Body of pancreas (tissue), 4 donors: ENCODE measurements at regions of chr17 and their contacts with region 1.

Region 1: GRCh38 chr17:31842183-31843069 is 16.6 kb downstream of the COPRS start:
- DNase-seq: peak; percentile 75 to 81 (median 78)
- ATAC-seq: peak; percentile 88
- H3K4me3 ChIP-seq: no peak overlapping the region
- H3K27ac ChIP-seq: peak overlapping the region; percentile 30 to 73 (median 65)
- H3K4me1 ChIP-seq: peaks cover 29% of the 10 kb centered on the region
- H3K27me3 ChIP-seq: no peaks in the 10 kb centered on the region
- CTCF ChIP-seq: peak; percentile 91 to 98 (median 97)
- POLR2A ChIP-seq: no peak

Region 2: DNA sequence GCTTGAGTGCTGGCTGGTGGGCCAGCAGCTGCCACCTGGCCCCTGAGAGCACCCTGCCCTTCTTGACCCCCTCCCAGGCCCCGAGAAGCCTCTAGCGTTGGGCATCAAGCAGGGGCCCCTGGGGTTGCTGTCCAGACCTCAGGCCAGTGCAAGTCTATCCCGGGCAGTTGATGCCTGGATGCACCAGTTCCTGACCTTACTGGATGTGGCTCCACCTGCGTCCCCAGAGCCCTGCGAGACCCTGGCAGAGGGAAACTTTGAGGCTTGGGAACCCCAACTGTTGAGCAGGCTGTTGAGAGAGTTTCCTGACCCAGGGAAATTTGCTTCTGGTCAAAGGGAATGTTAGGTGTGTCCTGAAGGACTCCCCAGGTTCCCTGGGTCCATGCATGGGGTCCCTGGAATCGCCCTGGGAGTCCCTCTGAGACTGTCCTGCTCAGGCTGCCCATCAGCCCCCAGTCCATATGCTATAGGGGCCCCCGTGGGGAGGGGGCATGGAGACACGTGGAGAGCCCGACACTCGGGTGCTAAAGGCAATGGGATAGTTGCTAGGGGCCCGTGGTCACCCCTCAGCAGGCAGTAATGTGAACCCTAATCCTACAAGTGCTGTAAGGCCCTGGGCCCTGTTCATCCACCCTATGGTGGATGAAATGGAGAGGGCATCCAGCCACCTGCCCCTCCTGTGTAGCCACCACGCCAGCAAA is 404.6 kb before region 1 on chr17:
- intact Hi-C with region 1: loop called (anchors 5 kb)
- DNase-seq: no peak
- ATAC-seq: no peak
- H3K4me3 ChIP-seq: no peak overlapping the region
- H3K27ac ChIP-seq: no peak overlapping the region
- H3K4me1 ChIP-seq: peaks cover 19% of the 10 kb centered on the region
- H3K27me3 ChIP-seq: no peaks in the 10 kb centered on the region
- CTCF ChIP-seq: no peak
- POLR2A ChIP-seq: no peak

Region 3: GRCh38 chr17:31561469-31562375 is 280.7 kb before region 1 on chr17:
- intact Hi-C with region 1: loop called (anchors 5 kb)
- DNase-seq: no peak
- ATAC-seq: no peak
- H3K4me3 ChIP-seq: no peak overlapping the region
- H3K27ac ChIP-seq: peak overlapping the region; percentile 90 to 93 (median 92)
- H3K4me1 ChIP-seq: peaks cover 68% of the 10 kb centered on the region
- H3K27me3 ChIP-seq: no peaks in the 10 kb centered on the region
- CTCF ChIP-seq: no peak
- POLR2A ChIP-seq: peak in 2 of 3 donors; percentile 26 to 32

Region 4: DNA sequence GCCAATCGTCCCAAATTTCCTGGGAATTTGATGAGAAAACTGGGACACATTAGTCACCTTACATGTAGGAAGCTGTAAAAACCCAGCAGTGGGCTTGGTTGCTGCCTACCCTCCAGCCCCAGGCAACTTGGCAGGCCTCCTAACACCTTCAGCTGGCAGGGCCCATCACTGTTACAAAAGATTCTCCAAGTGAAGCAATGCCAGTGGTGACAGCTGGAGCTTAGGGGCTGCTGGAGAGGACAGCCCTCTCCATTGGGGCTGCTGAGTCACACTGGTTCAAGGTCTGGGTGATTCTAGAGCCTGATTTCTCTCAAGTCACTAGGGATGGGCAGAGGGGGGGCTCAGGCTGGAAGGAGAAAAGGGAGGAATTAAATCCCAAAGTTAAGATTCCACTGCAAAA is 164.0 kb before region 1 on chr17:
- intact Hi-C with region 1: no loop called
- DNase-seq: no peak
- ATAC-seq: no peak
- H3K4me3 ChIP-seq: no peak overlapping the region
- H3K27ac ChIP-seq: no peak overlapping the region
- H3K4me1 ChIP-seq: no peaks in the 10 kb centered on the region
- H3K27me3 ChIP-seq: no peaks in the 10 kb centered on the region
- CTCF ChIP-seq: no peak
- POLR2A ChIP-seq: no peak